Right lobe of liver (tissue), 6 donors: ENCODE measurements at regions of chr6 and their contacts with region 1.

Region 1: GRCh38 chr6:154928325-154928922 is 66.7 kb upstream of the TIAM2 start:
- DNase-seq: peak in 2 of 3 donors; percentile 39 to 59
- ATAC-seq: peak; percentile 82 to 92 (median 88)
- H3K4me3 ChIP-seq: no peak overlapping the region
- H3K27ac ChIP-seq: no peak overlapping the region
- H3K4me1 ChIP-seq: peaks cover 0 to 3% (median 0%) of the 10 kb centered on the region in 4 donors
- H3K27me3 ChIP-seq: no peaks in the 10 kb centered on the region
- CTCF ChIP-seq: peak; percentile 76 to 82 (median 78)
- POLR2A ChIP-seq: no peak

Region 2: DNA sequence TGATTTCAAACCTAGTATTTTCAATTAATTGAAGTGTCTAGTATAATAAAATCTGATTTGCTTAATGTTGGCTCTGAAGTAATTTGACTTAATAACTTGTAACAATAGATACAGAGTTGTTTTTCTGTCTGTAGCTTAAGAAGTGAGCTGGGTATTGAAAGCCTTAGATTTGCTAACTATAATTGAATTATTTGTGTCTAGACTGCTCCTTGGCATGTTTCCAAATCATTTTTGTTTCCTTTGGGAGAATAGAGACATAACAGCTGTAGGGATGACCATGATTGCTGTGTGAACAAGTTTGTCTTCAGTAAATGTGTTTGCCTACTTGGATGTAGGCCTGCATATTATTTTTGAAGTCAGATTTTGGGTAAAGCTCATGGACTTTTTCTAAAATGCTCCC is 79.8 kb before region 1 on chr6:
- intact Hi-C with region 1: no loop called
- DNase-seq: no peak
- ATAC-seq: no peak
- H3K4me3 ChIP-seq: no peak overlapping the region
- H3K27ac ChIP-seq: no peak overlapping the region
- H3K4me1 ChIP-seq: peaks cover 0 to 10% (median 0%) of the 10 kb centered on the region in 4 donors
- H3K27me3 ChIP-seq: no peaks in the 10 kb centered on the region
- CTCF ChIP-seq: no peak
- POLR2A ChIP-seq: no peak

Region 3: DNA sequence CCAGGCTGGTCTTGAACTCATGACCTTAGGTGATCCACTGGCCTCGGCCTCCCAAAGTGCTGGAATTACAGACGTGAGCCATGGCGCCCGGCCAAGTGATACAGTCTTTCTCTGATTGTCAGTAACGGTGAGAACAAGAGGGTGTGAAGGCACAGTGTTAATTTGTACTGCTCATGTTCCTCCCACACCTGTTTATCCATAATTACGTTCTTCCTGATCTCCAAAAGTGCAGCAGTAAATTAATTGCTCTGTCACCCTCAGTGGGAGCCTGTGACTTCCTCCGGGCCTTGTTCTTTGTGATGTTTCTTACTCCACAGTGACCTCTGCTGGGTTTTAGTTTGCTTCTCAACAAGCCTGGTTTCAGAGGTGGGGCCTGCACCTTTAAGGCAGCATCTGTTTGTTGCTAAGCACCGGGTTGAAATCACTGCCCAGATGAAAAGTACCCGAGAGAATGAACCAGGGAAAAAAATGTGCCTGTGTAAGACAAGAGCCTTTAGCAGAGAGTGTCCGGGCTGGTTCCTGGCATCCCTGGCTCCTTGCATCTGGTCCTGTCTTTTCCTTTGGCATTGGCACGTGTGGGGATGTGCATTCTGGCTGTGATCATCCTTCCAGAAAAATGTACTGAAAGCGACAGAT is 246.3 kb after region 1 on chr6:
- intact Hi-C with region 1: loop called in 1 of 2 experiments (anchors 10 kb)
- DNase-seq: peak in 1 of 3 donors; percentile 51
- ATAC-seq: peak; percentile 85 to 95 (median 94)
- H3K4me3 ChIP-seq: no peak overlapping the region
- H3K27ac ChIP-seq: no peak overlapping the region
- H3K4me1 ChIP-seq: no peaks in the 10 kb centered on the region
- H3K27me3 ChIP-seq: no peaks in the 10 kb centered on the region
- CTCF ChIP-seq: peak; percentile 45 to 60 (median 53)
- POLR2A ChIP-seq: no peak

Region 4: GRCh38 chr6:155219858-155220301 is 291.5 kb after region 1 on chr6:
- intact Hi-C with region 1: no loop called
- DNase-seq: no peak
- ATAC-seq: no peak
- H3K4me3 ChIP-seq: no peak overlapping the region
- H3K27ac ChIP-seq: no peak overlapping the region
- H3K4me1 ChIP-seq: no peaks in the 10 kb centered on the region
- H3K27me3 ChIP-seq: no peaks in the 10 kb centered on the region
- CTCF ChIP-seq: no peak
- POLR2A ChIP-seq: no peak